AG04450 (cell line): ENCODE measurements at regions of chr16 and their contacts with region 1.

Region 1: DNA sequence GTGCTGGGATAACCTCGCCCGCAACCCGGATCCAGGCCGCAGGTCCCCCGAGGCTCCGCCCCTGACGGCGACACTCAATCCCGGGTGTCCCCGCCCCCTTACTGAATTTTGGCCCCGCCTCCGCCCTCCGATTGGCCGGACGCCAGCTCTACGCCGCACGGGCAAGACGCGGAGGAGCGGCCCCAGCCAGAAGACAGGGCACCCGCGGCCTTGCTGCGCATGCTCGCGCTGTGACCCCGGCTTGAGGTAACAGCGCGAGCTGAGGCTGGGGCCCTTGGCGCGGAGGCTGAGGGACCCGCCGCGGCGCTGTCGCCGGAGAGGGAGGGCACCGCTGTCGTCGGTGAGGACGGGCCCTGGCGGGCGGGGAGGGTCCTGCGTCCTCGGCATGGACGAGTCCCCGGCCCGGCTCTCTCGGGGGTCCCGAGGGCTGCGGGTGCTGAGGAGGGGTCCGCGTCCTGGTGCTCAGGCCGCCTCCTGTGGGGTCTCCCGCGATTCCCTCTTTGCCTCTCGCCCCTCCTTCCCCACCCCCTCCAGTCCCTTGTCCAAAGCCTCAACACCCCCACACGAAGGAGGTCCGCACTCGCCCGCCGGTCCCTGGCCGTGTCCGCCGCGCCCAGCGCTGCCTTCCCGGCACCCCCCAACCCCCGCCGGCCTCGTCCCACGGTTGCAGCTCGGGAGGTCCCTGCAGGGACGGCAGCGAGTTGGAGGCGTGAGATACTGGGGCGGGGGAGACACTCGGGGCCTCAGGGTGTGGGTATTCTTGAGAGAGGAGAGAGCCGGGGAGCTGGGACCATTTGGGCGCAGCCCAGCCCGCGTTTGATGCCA is at the start of gene FLYWCH2:
- DNase-seq: peak; percentile 91
- H3K4me3 ChIP-seq: peak within 1 kb of the TSS; percentile 83
- H3K27ac ChIP-seq: peak within 1 kb of the TSS; percentile 87
- H3K27me3 ChIP-seq: peaks cover 2% of the 10 kb centered on the region
- CTCF ChIP-seq: no peak
- polyA plus RNA-seq, gene FLYWCH2: 22.4 and 37.5 TPM in 2 replicates

Region 2: GRCh38 chr16:2867987-2868789 is 15.1 kb before region 1 on chr16:
- CTCF ChIA-PET with region 1: interaction called, 11 read pairs
- POLR2A ChIA-PET with region 1: interaction called, 16 read pairs
- DNase-seq: peak; percentile 84
- H3K4me3 ChIP-seq: peak overlapping the region; percentile 66
- H3K27ac ChIP-seq: peak overlapping the region; percentile 89
- H3K27me3 ChIP-seq: no peaks in the 10 kb centered on the region
- CTCF ChIP-seq: peak; percentile 94

Region 3: GRCh38 chr16:2905431-2906387 is 22.5 kb after region 1 on chr16:
- CTCF ChIA-PET with region 1: interaction called, 4 read pairs
- POLR2A ChIA-PET with region 1: interaction called, 11 read pairs
- DNase-seq: peak; percentile 99
- H3K4me3 ChIP-seq: peak overlapping the region; percentile 75
- H3K27ac ChIP-seq: no peak overlapping the region
- H3K27me3 ChIP-seq: no peaks in the 10 kb centered on the region
- CTCF ChIP-seq: no peak

Region 4: GRCh38 chr16:2911580-2912329 is 28.5 kb after region 1 on chr16 and contains the start of gene FLYWCH1:
- CTCF ChIA-PET with region 1: interaction called, 4 read pairs
- POLR2A ChIA-PET with region 1: interaction called, 14 read pairs
- DNase-seq: peak; percentile 94
- H3K4me3 ChIP-seq: peak within 1 kb of the TSS; percentile 91
- H3K27ac ChIP-seq: peak within 1 kb of the TSS; percentile 91
- H3K27me3 ChIP-seq: no peaks in the 10 kb centered on the region
- CTCF ChIP-seq: no peak
- polyA plus RNA-seq, gene FLYWCH1: 15.1 and 19.8 TPM in 2 replicates

Region 5: GRCh38 chr16:3059000-3059722 is 175.9 kb after region 1 on chr16:
- CTCF ChIA-PET with region 1: no interaction called
- POLR2A ChIA-PET with region 1: no interaction called
- DNase-seq: peak; percentile 33
- H3K4me3 ChIP-seq: peak overlapping the region; percentile 79
- H3K27ac ChIP-seq: peak overlapping the region; percentile 57
- H3K27me3 ChIP-seq: no peaks in the 10 kb centered on the region
- CTCF ChIP-seq: peak; percentile 61